ENCODE measurements at regions of chr1 and their contacts with region 1.

Region 1: GRCh38 chr1:15430787-15431570 is 7.3 kb upstream of the CTRC start:
- DNase-seq: peak; percentile 81 to 86 (median 85)
- ATAC-seq: peak; percentile 84
- H3K4me3 ChIP-seq: no peak overlapping the region
- H3K27ac ChIP-seq: no peak overlapping the region
- H3K4me1 ChIP-seq: peaks cover 13 to 42% of the 10 kb centered on the region in 2 experiments; a peak in 4 of 5 replicates
- H3K27me3 ChIP-seq: no peaks in the 10 kb centered on the region
- CTCF ChIP-seq: peak; percentile 92 to 99 (median 93)
- EP300 ChIP-seq: no peak
- POLR2A ChIP-seq: 0 out of 2 replicates have a peak, but pooled peaks have one; percentile 37
- RAD21 ChIP-seq: peak; percentile 95 to 99

Region 2: GRCh38 chr1:15128520-15129313 is 302.3 kb before region 1 on chr1:
- CTCF ChIA-PET with region 1: interaction called, 3 read pairs
- POLR2A ChIA-PET with region 1: no interaction called
- in situ Hi-C with region 1: loop called (anchors 10 kb)
- intact Hi-C with region 1: no loop called
- DNase-seq: peak; percentile 81 to 86 (median 82)
- ATAC-seq: peak; percentile 100
- H3K4me3 ChIP-seq: no peak overlapping the region
- H3K27ac ChIP-seq: no peak overlapping the region
- H3K4me1 ChIP-seq: peaks cover 0 to 4% of the 10 kb centered on the region in 2 experiments; a peak in 1 of 5 replicates
- H3K27me3 ChIP-seq: peaks cover 4 to 35% of the 10 kb centered on the region in 2 experiments; a peak in 3 of 5 replicates
- CTCF ChIP-seq: peak; percentile 92 to 97 (median 95)
- EP300 ChIP-seq: no peak
- POLR2A ChIP-seq: no peak
- RAD21 ChIP-seq: peak; percentile 92 to 96

Region 3: GRCh38 chr1:15152318-15153183 is 278.4 kb before region 1 on chr1:
- CTCF ChIA-PET with region 1: no interaction called
- POLR2A ChIA-PET with region 1: interaction called, 6 read pairs
- in situ Hi-C with region 1: loop called (anchors 5 kb)
- intact Hi-C with region 1: loop called (anchors 10 kb)
- DNase-seq: peak; percentile 65 to 81 (median 74)
- ATAC-seq: peak; percentile 84
- H3K4me3 ChIP-seq: peak overlapping the region; percentile 23
- H3K27ac ChIP-seq: no peak overlapping the region
- H3K4me1 ChIP-seq: peaks cover 6 to 26% of the 10 kb centered on the region in 2 experiments
- H3K27me3 ChIP-seq: peaks cover 16 to 82% of the 10 kb centered on the region in 2 experiments; a peak in 4 of 5 replicates
- CTCF ChIP-seq: peak; percentile 73 to 90 (median 82)
- EP300 ChIP-seq: no peak; the same call in 1 of the 2 replicates
- POLR2A ChIP-seq: no peak
- RAD21 ChIP-seq: peak; percentile 83 to 92

Region 4: DNA sequence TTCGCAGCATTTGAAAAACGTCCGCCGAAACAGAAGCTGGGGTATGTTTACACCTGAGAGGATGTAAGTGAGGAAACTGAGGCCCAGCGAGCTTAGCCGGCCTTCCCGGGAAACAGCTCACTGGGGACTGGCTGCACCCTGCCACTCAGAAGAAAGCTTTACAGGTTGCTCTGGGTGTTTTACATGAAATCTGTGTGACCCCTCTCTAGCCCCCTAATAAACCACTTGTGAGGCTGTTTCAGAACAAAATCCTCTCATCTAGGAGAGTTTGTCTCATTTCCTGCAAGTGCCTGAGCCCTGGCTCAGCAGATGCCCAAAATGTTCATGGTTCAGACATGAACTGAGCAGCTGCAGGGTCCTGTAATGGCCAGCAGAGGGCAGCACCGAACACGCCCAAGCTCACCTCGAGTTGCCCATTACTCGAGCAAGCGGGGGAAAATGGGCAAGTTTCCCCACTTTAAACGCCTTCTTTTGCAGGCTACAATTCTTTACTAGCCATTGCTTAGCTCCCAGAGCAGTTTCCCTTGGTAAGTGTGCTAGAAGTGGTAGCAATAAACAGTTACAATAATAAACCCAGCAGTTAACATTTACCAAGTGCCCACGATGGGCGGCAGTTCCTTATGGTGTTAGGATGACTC is 107.5 kb before region 1 on chr1:
- CTCF ChIA-PET with region 1: interaction called, 46 read pairs
- POLR2A ChIA-PET with region 1: interaction called, 3 read pairs
- in situ Hi-C with region 1: loop called (anchors 5 kb)
- intact Hi-C with region 1: loop called (anchors 1 kb)
- DNase-seq: peak; percentile 73 to 89 (median 84)
- ATAC-seq: peak; percentile 93
- H3K4me3 ChIP-seq: peak overlapping the region; percentile 24
- H3K27ac ChIP-seq: no peak overlapping the region; the same call in 2 of the 3 replicates
- H3K4me1 ChIP-seq: peaks cover 23 to 27% of the 10 kb centered on the region in 2 experiments
- H3K27me3 ChIP-seq: no peaks in the 10 kb centered on the region; a peak in 2 of 5 replicates
- CTCF ChIP-seq: peak; percentile 90 to 99 (median 94)
- EP300 ChIP-seq: no peak
- POLR2A ChIP-seq: no peak
- RAD21 ChIP-seq: peak; percentile 90

Region 5: DNA sequence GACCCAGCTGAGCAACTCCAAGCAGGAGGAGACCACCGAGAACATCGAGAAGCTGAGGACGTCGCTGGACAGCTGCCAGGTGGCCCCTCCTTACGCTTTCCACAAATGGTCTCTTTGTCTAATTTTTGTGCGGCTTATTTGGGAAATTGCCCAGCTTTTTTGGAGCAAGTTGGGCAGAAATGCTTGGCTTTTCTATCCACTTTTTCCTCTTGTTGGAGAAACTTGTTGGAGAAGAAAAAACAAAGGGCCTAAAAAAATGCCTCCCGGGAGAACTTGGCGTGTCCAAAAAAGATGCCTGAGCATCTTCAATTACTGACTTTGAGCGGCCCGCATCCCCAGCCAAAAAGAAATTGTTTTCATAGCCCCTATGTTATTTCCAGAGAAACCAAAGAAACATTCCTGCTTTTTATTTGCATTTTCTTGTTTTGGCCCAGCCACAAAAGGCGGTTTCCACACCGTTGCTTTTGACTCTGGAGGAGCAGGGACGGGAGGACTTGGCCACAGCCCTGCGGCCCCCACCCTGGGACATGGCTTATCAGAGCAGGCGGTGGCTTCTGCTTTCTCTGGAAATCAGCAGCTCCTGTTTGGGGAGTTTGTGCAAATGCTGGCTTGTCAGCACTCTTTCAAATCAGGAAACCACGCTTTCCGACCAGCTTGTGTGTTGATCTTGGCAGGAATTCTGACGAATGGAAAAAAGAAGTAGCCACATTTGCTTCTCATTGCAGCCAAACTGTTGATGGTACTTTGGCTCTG is 102.5 kb before region 1 on chr1:
- CTCF ChIA-PET with region 1: interaction called, 46 read pairs
- POLR2A ChIA-PET with region 1: interaction called, 3 read pairs
- in situ Hi-C with region 1: loop called (anchors 5 kb)
- intact Hi-C with region 1: loop called (anchors 1 kb)
- DNase-seq: peak; percentile 52 to 79 (median 60)
- ATAC-seq: peak; percentile 67
- H3K4me3 ChIP-seq: no peak overlapping the region
- H3K27ac ChIP-seq: peak overlapping the region; percentile 43; the same call in 1 of the 3 replicates
- H3K4me1 ChIP-seq: peaks cover 27 to 32% of the 10 kb centered on the region in 2 experiments
- H3K27me3 ChIP-seq: peaks cover 0 to 5% of the 10 kb centered on the region in 2 experiments; a peak in 2 of 5 replicates
- CTCF ChIP-seq: no peak
- EP300 ChIP-seq: no peak
- POLR2A ChIP-seq: no peak
- RAD21 ChIP-seq: no peak

Region 6: GRCh38 chr1:15355968-15356621 is 74.9 kb before region 1 on chr1:
- CTCF ChIA-PET with region 1: no interaction called
- POLR2A ChIA-PET with region 1: no interaction called
- in situ Hi-C with region 1: no loop called
- intact Hi-C with region 1: no loop called
- DNase-seq: no peak
- ATAC-seq: no peak
- H3K4me3 ChIP-seq: no peak overlapping the region
- H3K27ac ChIP-seq: no peak overlapping the region
- H3K4me1 ChIP-seq: peaks cover 17 to 31% of the 10 kb centered on the region in 2 experiments
- H3K27me3 ChIP-seq: no peaks in the 10 kb centered on the region
- CTCF ChIP-seq: no peak
- EP300 ChIP-seq: no peak
- POLR2A ChIP-seq: no peak
- RAD21 ChIP-seq: no peak

Region 7: DNA sequence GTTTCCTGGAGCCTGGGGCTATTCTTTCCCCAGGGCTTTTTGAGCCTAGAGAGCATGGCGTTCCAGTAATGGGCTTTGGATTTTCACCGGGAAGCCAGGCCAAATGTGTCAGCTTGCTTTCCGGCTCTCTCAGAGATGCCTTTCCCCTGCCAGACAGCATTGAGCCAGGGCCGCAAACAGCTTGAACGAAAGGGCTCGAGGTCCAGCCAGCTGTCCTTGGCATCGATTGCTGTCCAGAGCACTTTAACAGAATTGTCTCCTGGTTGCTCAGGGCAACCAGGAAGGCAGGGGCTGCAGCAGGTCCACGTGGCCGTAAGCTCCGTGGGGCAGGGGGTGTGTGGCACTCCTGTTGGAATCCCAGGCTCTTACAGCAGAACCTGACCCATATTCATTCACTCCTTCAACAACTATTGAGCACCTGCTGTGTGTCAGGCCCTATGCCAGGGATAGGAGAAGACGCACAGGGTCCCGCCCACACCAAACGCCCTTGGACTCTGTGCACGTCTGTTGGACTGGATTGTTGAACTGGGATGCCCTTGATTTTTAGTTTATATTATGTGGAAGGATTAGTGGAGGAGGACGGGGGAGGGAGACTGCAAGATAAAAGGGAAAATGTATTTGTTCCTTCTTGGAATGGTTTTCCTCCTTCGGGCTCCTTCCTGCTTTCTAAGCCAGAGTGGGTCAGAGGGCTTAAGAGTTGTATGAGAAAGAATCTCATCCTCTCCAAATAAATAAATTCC is 60.0 kb before region 1 on chr1:
- CTCF ChIA-PET with region 1: no interaction called
- POLR2A ChIA-PET with region 1: no interaction called
- in situ Hi-C with region 1: no loop called
- intact Hi-C with region 1: no loop called
- DNase-seq: no peak
- ATAC-seq: no peak
- H3K4me3 ChIP-seq: no peak overlapping the region
- H3K27ac ChIP-seq: no peak overlapping the region
- H3K4me1 ChIP-seq: peaks cover 0 to 11% of the 10 kb centered on the region in 2 experiments; a peak in 3 of 5 replicates
- H3K27me3 ChIP-seq: peaks cover 16 to 44% of the 10 kb centered on the region in 2 experiments
- CTCF ChIP-seq: no peak
- EP300 ChIP-seq: no peak
- POLR2A ChIP-seq: no peak
- RAD21 ChIP-seq: no peak

Region 8: DNA sequence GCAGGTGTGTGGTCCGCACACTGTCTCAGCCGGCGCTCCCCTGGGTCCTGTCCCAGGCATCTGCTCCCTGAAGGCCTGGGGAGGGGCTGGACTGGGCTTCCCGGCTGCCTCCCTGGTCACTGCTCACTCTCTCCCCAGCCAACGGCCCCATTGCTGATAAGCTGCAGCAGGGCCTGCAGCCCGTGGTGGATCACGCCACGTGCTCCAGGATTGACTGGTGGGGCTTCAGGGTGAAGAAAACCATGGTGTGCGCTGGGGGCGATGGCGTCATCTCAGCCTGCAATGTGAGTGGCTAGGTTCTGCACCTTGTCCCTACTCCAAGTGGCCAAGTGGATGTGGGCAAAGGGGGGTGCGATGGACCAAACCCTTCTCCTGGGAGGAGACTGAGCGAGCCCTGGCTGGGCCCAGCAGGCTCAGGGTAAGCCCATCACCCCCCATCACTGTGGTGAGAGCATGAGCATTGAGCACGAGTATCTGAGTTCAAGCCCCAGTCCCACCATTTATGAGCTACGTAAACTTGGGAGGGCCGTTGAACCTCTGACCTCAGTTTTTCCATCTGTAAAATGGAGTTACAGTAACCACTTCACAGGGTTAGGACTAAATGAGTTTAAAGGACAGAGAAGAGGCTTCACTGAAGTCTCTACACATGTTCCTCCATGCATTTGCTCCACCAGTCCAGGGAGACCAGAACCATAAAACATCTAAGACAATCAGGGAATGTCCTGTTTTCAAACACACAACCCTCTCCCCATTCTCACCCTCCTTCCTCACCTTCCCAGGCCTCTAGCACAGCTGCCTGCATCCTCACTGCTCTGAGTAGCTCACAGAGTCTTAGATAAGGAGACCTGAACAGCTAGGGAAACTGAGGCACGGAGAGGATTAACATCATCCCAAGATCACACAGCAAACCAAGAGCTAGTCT is 13.8 kb after region 1 on chr1:
- CTCF ChIA-PET with region 1: no interaction called
- POLR2A ChIA-PET with region 1: interaction called, 12 read pairs
- in situ Hi-C with region 1: no loop called
- intact Hi-C with region 1: no loop called
- DNase-seq: peak; percentile 73 to 81 (median 76)
- ATAC-seq: peak; percentile 87
- H3K4me3 ChIP-seq: no peak overlapping the region
- H3K27ac ChIP-seq: no peak overlapping the region
- H3K4me1 ChIP-seq: peaks cover 7 to 16% of the 10 kb centered on the region in 2 experiments; a peak in 4 of 5 replicates
- H3K27me3 ChIP-seq: no peaks in the 10 kb centered on the region
- CTCF ChIP-seq: no peak
- EP300 ChIP-seq: peak; percentile 14; the same call in 1 of the 2 replicates
- POLR2A ChIP-seq: no peak
- RAD21 ChIP-seq: no peak; a peak in 1 of 4 replicates

Region 9: GRCh38 chr1:15691434-15692032 is 260.6 kb after region 1 on chr1:
- CTCF ChIA-PET with region 1: no interaction called
- POLR2A ChIA-PET with region 1: no interaction called
- in situ Hi-C with region 1: no loop called
- intact Hi-C with region 1: no loop called
- DNase-seq: peak in 1 of 4 experiments; percentile 15
- ATAC-seq: peak; percentile 10
- H3K4me3 ChIP-seq: no peak overlapping the region
- H3K27ac ChIP-seq: peak overlapping the region; percentile 63; the same call in 1 of the 3 replicates
- H3K4me1 ChIP-seq: peaks cover 13 to 18% of the 10 kb centered on the region in 2 experiments; a peak in 4 of 5 replicates
- H3K27me3 ChIP-seq: no peaks in the 10 kb centered on the region
- CTCF ChIP-seq: no peak
- EP300 ChIP-seq: no peak
- POLR2A ChIP-seq: no peak
- RAD21 ChIP-seq: no peak